ENCODE measurements at regions of chr3 and their contacts with region 1.

Region 1: DNA sequence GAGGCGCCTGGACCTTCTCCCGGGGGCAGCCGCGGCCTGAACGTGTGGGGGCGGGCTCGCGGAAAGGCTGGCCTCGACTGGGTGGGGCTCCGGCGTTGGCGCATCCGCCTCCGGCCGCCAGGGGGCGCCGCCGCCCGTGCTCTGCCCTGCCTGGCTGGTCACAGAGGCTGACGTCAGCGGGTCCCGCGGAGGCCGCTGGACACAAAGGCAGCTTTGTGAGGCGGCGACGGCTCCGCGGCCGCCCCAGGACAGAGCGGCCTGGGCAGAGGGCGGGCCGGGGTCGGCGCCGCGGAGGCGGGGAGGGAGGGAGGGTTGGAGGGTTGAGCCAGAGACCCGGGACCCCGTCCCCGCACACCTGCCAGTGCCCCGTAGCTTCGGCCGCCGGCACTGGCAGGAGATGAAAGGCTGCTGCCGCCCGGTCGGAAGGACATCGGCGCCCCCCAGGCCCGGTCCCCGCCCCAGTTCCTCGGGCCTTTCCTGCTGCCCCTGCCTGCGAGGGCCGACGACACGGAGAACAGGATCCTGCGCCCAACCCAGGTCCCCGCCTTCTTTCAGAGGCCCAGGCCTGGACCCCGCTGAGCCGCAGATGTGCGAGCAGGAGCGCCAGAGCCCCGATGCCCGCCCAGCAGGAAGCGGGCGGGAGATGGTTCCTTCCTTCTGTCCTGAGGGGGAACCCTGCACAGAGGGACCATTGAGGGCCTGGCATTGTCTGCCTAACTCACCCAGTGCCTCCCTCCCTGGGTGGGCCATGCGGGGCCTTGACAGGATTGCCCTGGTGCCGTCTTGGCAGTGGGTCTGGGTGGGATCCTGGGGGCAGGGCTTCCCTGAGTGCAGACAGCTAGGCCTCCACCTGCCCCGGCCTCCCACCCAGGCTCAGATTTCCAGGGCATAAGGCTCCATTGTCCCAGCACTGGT is 8.7 kb upstream of the SEMA3B start:
- DNase-seq: peak; percentile 98
- CTCF ChIP-seq: peak; percentile 99

Region 2: GRCh38 chr3:49906004-49906743 is 354.1 kb before region 1 on chr3:
- CTCF ChIA-PET with region 1: no interaction called
- POLR2A ChIA-PET with region 1: no interaction called
- DNase-seq: peak; percentile 75
- CTCF ChIP-seq: peak; percentile 63

Region 3: DNA sequence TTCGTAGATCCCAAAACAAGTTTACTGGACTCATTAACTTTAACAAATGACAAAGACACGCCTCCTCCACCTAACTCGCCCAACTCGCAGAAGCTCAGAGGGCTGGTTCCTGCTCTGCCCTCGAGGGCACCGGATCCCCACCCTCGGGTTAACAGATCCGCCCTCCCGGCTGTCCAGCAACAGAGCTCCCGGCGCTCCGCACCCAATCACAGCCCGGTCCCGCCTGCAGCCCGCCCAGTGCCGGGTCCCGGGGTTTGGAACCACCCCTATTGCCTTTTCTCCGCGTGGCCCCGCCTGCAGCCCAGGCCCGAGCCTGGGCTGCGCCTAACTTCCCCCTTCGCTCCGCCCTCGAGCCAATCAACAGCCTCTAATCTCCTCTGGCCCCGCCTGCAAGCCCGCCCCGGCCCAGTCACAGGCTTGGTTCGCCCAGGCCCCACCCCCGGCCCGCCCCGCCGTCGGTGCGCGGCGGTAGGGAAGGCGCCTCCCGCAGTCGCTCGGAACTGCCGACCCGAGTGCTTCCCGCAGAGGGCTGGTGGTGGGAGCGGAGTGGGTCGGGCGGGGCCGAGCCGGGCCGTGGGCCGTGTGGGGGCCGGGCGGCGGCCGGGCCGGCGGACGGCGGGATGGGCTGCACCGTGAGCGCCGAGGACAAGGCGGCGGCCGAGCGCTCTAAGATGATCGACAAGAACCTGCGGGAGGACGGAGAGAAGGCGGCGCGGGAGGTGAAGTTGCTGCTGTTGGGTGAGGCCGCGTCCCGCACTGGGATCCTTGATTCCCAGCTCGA is 24.4 kb before region 1 on chr3 and contains the start of gene GNAI2:
- CTCF ChIA-PET with region 1: interaction called, 88 read pairs
- POLR2A ChIA-PET with region 1: no interaction called
- DNase-seq: peak; percentile 99
- CTCF ChIP-seq: no peak

Region 4: GRCh38 chr3:50272911-50273693 is 12.8 kb after region 1 on chr3:
- CTCF ChIA-PET with region 1: interaction called, 41 read pairs
- POLR2A ChIA-PET with region 1: no interaction called
- DNase-seq: peak; percentile 98
- CTCF ChIP-seq: peak; percentile 98

Region 5: GRCh38 chr3:50352781-50353180 is 92.5 kb after region 1 on chr3:
- CTCF ChIA-PET with region 1: no interaction called
- POLR2A ChIA-PET with region 1: no interaction called
- DNase-seq: no peak
- CTCF ChIP-seq: peak; percentile 27